B cell (primary cell): ENCODE measurements at regions of chr13 and their contacts with region 1.

Region 1: GRCh38 chr13:26985285-26985878 is 186.2 kb downstream of the USP12 start:
- DNase-seq: peak; percentile 84
- ATAC-seq: peak; percentile 94
- H3K4me3 ChIP-seq: no peak overlapping the region
- H3K4me3 Mint-ChIP-seq: no peak overlapping the region
- H3K27ac ChIP-seq: no peak overlapping the region
- H3K27ac Mint-ChIP-seq: no peak overlapping the region
- H3K4me1 ChIP-seq: peaks cover 0 to 5% of the 10 kb centered on the region in 2 donors
- H3K4me1 Mint-ChIP-seq: peaks cover 4% of the 10 kb centered on the region
- H3K27me3 ChIP-seq: peaks cover 0 to 10% (median 0%) of the 10 kb centered on the region in 4 experiments
- H3K27me3 Mint-ChIP-seq: peaks cover 3% of the 10 kb centered on the region
- CTCF ChIP-seq: peak; percentile 84

Region 2: DNA sequence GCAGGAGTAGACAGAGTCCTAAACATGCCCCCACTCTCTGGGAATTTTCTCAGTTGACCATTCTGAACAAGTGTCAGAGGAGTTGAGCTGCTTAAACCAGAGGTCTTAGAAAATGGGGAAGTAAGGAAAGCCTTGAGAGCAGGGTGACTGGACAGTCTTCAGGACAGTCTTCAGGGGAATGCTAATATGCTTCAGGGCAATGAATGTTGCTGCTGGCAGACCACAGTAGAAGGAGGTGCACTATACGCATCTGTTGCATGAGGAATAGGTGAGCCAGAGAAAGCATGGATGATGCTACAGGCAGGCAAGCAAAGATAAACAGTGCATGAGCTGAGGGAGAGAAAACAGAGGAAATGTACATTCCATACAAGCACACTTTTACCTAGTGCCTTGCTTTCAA is 28.2 kb before region 1 on chr13:
- CTCF ChIA-PET with region 1: no interaction called
- POLR2A ChIA-PET with region 1: no interaction called
- intact Hi-C with region 1: no loop called
- DNase-seq: no peak
- ATAC-seq: no peak
- H3K4me3 ChIP-seq: no peak overlapping the region
- H3K4me3 Mint-ChIP-seq: no peak overlapping the region
- H3K27ac ChIP-seq: no peak overlapping the region
- H3K27ac Mint-ChIP-seq: no peak overlapping the region
- H3K4me1 ChIP-seq: no peaks in the 10 kb centered on the region
- H3K4me1 Mint-ChIP-seq: no peaks in the 10 kb centered on the region
- H3K27me3 ChIP-seq: peaks cover 0 to 6% (median 0%) of the 10 kb centered on the region in 4 experiments
- H3K27me3 Mint-ChIP-seq: peaks cover 24% of the 10 kb centered on the region
- CTCF ChIP-seq: no peak

Region 3: GRCh38 chr13:26971990-26972887 is 13.1 kb before region 1 on chr13:
- CTCF ChIA-PET with region 1: interaction called, 16 read pairs
- POLR2A ChIA-PET with region 1: no interaction called
- intact Hi-C with region 1: no loop called
- DNase-seq: peak; percentile 47
- ATAC-seq: no peak
- H3K4me3 ChIP-seq: no peak overlapping the region
- H3K4me3 Mint-ChIP-seq: no peak overlapping the region
- H3K27ac ChIP-seq: no peak overlapping the region
- H3K27ac Mint-ChIP-seq: peak overlapping the region; percentile 54
- H3K4me1 ChIP-seq: peaks cover 0 to 3% of the 10 kb centered on the region in 2 donors
- H3K4me1 Mint-ChIP-seq: peaks cover 7% of the 10 kb centered on the region
- H3K27me3 ChIP-seq: no peaks in the 10 kb centered on the region
- H3K27me3 Mint-ChIP-seq: no peaks in the 10 kb centered on the region
- CTCF ChIP-seq: no peak

Region 4: DNA sequence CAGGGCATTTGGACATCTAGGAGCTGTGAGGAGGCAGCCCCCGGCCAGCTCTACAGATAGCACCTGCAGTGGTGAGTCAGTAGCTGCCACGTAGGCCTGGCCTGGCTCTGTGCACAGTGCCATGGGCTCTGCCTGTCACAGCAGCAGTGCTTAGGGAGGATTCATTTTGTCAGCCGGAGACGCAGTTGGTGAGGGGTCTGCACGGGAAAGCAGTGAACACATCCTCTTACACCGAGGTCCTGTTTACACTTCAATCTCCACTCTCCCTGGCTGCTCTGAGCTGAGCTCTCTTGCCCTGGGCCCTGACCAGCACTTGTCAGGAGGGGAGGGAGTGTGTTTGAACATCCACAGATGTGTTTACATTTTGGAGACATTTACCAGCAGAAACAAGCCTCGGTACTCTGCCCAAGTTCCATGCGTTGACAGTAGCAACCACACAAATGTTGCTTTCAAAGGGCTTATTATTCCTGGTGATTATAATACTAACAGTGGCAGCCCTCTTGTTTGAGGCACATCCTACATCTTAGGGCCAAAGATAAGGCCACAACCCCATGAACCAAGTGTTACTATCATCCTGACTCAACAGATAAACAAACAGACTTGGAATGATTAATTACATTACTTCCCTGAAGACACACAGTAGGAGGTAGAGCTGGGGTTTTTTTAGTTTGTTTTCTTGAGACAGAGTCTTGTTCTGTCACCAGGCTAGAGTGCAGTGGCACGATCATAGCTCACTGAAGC is 37.4 kb after region 1 on chr13:
- CTCF ChIA-PET with region 1: interaction called, 12 read pairs
- POLR2A ChIA-PET with region 1: no interaction called
- intact Hi-C with region 1: no loop called
- DNase-seq: no peak
- ATAC-seq: no peak
- H3K4me3 ChIP-seq: no peak overlapping the region
- H3K4me3 Mint-ChIP-seq: no peak overlapping the region
- H3K27ac ChIP-seq: no peak overlapping the region
- H3K27ac Mint-ChIP-seq: no peak overlapping the region
- H3K4me1 ChIP-seq: peaks cover 0 to 8% of the 10 kb centered on the region in 2 donors
- H3K4me1 Mint-ChIP-seq: peaks cover 15% of the 10 kb centered on the region
- H3K27me3 ChIP-seq: no peaks in the 10 kb centered on the region
- H3K27me3 Mint-ChIP-seq: peaks cover under 1% of the 10 kb centered on the region
- CTCF ChIP-seq: no peak

Region 5: DNA sequence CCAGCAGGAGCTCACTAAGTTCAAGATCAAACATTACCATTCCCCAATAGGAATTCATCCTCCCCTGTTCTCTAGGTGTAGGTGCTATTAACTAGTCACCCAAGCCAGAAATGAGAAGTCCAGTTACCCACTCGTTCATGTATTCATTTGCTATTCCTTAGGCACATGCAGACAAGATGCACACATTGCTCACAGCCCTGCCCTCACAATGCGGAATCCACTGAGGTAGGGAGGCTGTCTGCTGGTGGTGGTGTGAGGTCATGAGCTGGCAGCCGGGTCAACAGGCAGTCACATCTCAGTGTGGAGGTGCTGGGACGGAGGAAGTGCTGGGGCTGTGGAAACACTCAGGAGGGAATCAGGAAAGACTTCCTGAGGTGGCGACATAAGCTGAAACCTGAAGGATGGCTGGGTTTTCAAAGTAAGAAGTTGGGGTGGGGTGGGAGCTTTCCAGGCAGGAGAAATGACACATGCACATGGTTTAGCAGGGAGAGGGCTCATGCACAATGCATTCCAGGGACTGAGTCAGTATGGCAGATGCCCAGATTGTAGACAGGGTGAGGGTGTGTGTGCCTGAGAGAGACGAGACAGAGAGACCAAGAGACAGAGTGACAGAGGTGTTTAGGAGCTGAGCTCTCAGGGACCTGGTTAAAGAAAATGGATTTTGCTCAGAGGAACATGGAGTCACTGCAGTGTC is 68.7 kb after region 1 on chr13:
- CTCF ChIA-PET with region 1: no interaction called
- POLR2A ChIA-PET with region 1: no interaction called
- intact Hi-C with region 1: no loop called
- DNase-seq: no peak
- ATAC-seq: no peak
- H3K4me3 ChIP-seq: no peak overlapping the region
- H3K4me3 Mint-ChIP-seq: no peak overlapping the region
- H3K27ac ChIP-seq: no peak overlapping the region
- H3K27ac Mint-ChIP-seq: no peak overlapping the region
- H3K4me1 ChIP-seq: no peaks in the 10 kb centered on the region
- H3K4me1 Mint-ChIP-seq: peaks cover 9% of the 10 kb centered on the region
- H3K27me3 ChIP-seq: no peaks in the 10 kb centered on the region
- H3K27me3 Mint-ChIP-seq: no peaks in the 10 kb centered on the region
- CTCF ChIP-seq: no peak

Region 6: GRCh38 chr13:27283906-27284493 is 298.6 kb after region 1 on chr13:
- CTCF ChIA-PET with region 1: interaction called, 47 read pairs
- POLR2A ChIA-PET with region 1: no interaction called
- intact Hi-C with region 1: loop called (anchors 1 kb)
- DNase-seq: peak; percentile 47
- ATAC-seq: peak; percentile 47
- H3K4me3 ChIP-seq: no peak overlapping the region
- H3K4me3 Mint-ChIP-seq: no peak overlapping the region
- H3K27ac ChIP-seq: no peak overlapping the region
- H3K27ac Mint-ChIP-seq: no peak overlapping the region
- H3K4me1 ChIP-seq: peaks cover 0 to 1% of the 10 kb centered on the region in 2 donors
- H3K4me1 Mint-ChIP-seq: peaks cover 5% of the 10 kb centered on the region
- H3K27me3 ChIP-seq: no peaks in the 10 kb centered on the region
- H3K27me3 Mint-ChIP-seq: no peaks in the 10 kb centered on the region
- CTCF ChIP-seq: peak; percentile 28

Region 7: GRCh38 chr13:27347211-27347772 is 361.9 kb after region 1 on chr13:
- CTCF ChIA-PET with region 1: interaction called, 26 read pairs
- POLR2A ChIA-PET with region 1: interaction called, 3 read pairs
- intact Hi-C with region 1: no loop called
- DNase-seq: no peak
- ATAC-seq: peak; percentile 31
- H3K4me3 ChIP-seq: no peak overlapping the region
- H3K4me3 Mint-ChIP-seq: peak overlapping the region; percentile 51
- H3K27ac ChIP-seq: no peak overlapping the region
- H3K27ac Mint-ChIP-seq: no peak overlapping the region
- H3K4me1 ChIP-seq: peaks cover 9 to 16% of the 10 kb centered on the region in 2 donors
- H3K4me1 Mint-ChIP-seq: peaks cover 19% of the 10 kb centered on the region
- H3K27me3 ChIP-seq: peaks cover 0 to 4% (median 1%) of the 10 kb centered on the region in 4 experiments
- H3K27me3 Mint-ChIP-seq: peaks cover 15% of the 10 kb centered on the region
- CTCF ChIP-seq: no peak

Region 8: DNA sequence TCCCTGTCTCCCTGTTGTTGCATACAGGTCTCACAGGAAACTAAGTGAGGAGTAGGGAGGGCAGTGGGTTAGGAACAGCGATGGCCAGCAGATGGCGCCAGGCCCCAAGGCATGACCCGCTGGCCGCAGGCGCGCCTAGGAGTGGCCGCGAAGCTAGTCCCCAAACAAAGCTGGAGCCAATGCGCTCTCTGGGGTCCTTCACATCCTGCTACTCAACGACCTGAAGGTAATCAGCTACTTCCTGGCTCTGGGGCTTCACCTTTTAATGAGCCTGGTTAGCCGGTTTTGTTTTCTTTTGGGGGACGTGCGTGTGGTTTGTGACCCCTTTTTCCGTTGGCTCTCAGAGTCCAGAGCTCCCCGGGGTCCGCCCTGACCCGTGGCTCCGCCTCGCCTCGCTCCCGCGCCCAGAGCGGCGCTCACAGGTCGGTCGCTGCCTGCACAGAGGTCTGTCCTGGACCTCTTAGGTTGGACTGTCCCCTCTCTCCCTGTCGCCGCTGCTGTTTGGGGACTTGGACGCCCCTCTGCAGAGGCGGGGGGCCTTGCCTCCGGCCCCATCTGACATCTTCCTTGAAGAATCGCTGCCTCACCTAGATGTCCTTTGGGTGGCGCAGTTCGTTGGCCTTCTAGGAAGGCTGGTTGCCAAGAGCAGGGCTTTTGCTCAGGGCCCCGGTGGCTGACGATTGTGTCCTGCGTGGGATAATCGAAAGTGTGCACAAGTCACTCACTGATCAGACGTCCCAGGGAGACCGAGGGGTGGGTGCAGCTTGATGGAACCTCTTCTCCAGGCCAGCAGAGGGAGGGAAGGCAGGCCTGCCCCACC is 376.9 kb after region 1 on chr13:
- CTCF ChIA-PET with region 1: interaction called, 323 read pairs
- POLR2A ChIA-PET with region 1: no interaction called
- intact Hi-C with region 1: loop called (anchors 1 kb)
- DNase-seq: peak; percentile 85
- ATAC-seq: peak; percentile 91
- H3K4me3 ChIP-seq: peak overlapping the region in 4 of 5 experiments; percentile 28 to 56 (median 42)
- H3K4me3 Mint-ChIP-seq: peak overlapping the region; percentile 49
- H3K27ac ChIP-seq: no peak overlapping the region
- H3K27ac Mint-ChIP-seq: no peak overlapping the region
- H3K4me1 ChIP-seq: peaks cover 10% of the 10 kb centered on the region in 2 donors
- H3K4me1 Mint-ChIP-seq: peaks cover 12% of the 10 kb centered on the region
- H3K27me3 ChIP-seq: peaks cover 0 to 30% (median 11%) of the 10 kb centered on the region in 4 experiments
- H3K27me3 Mint-ChIP-seq: peaks cover 22% of the 10 kb centered on the region
- CTCF ChIP-seq: peak; percentile 87

Region 9: GRCh38 chr13:27620377-27621115 is 635.2 kb after region 1 on chr13 and contains the start of gene LNX2:
- CTCF ChIA-PET with region 1: no interaction called
- POLR2A ChIA-PET with region 1: no interaction called
- intact Hi-C with region 1: loop called (anchors 10 kb)
- DNase-seq: peak; percentile 96
- ATAC-seq: peak; percentile 83
- H3K4me3 ChIP-seq: peak within 1 kb of the TSS; percentile 77 to 92 (median 90)
- H3K4me3 Mint-ChIP-seq: peak within 1 kb of the TSS; percentile 93
- H3K27ac ChIP-seq: peak within 1 kb of the TSS; percentile 98
- H3K27ac Mint-ChIP-seq: peak within 1 kb of the TSS; percentile 92
- H3K4me1 ChIP-seq: peaks cover 27 to 28% of the 10 kb centered on the region in 2 donors
- H3K4me1 Mint-ChIP-seq: peaks cover 62% of the 10 kb centered on the region
- H3K27me3 ChIP-seq: no peaks in the 10 kb centered on the region
- H3K27me3 Mint-ChIP-seq: no peaks in the 10 kb centered on the region
- CTCF ChIP-seq: no peak
- total RNA-seq, gene LNX2: 10.0 and 10.9 TPM in 2 replicates